MCF 10A (cell line): ENCODE measurements at regions of chr2 and their contacts with region 1.

Region 1: GRCh38 chr2:173075781-173076580 is at the start of gene MAP3K20:
- DNase-seq: peak; percentile 72
- H3K4me3 Mint-ChIP-seq: peak within 1 kb of the TSS; percentile 82
- H3K27ac Mint-ChIP-seq: peak within 1 kb of the TSS; percentile 95
- H3K4me1 Mint-ChIP-seq: peaks cover 31% of the 10 kb centered on the region
- H3K27me3 Mint-ChIP-seq: no peaks in the 10 kb centered on the region
- CTCF ChIP-seq: peak; percentile 40
- total RNA-seq, gene MAP3K20: 134 and 150 TPM in 2 replicates

Region 2: GRCh38 chr2:173015376-173015775 is 60.6 kb before region 1 on chr2:
- CTCF ChIA-PET with region 1: no interaction called
- POLR2A ChIA-PET with region 1: no interaction called
- intact Hi-C with region 1: no loop called
- DNase-seq: no peak
- H3K4me3 Mint-ChIP-seq: no peak overlapping the region
- H3K27ac Mint-ChIP-seq: no peak overlapping the region
- H3K4me1 Mint-ChIP-seq: no peaks in the 10 kb centered on the region
- H3K27me3 Mint-ChIP-seq: no peaks in the 10 kb centered on the region
- CTCF ChIP-seq: no peak

Region 3: DNA sequence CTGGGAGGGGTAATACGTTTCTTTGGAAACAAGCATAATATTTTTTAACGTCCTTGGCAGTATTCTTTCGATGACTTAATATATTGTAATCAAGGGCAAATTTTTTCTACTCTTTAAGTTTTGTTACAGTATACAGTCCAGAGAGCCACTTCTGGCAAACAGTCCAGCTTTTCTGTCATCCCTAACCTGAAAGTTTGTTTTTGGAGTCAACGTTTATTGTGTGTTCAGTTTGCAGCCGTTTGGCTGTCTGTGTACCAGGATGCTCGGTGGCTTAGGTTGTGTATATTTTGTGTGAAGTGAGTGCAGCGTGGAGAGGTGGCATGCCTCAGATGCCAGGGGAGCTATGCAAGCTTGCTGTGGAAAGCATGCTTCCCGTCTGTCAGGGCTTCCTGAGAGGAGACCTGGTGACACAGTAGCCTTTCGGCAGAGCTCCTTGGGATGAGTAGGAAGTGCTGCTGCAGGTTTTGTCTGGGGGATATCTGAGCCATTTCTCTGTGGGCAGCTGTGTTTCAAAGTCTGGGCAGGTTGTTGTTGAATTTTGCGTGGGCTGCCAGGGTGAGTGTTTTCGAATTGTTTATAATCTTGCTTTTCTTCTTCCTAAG is 14.4 kb after region 1 on chr2:
- CTCF ChIA-PET with region 1: interaction called, 3 read pairs
- POLR2A ChIA-PET with region 1: interaction called, 13 read pairs
- intact Hi-C with region 1: no loop called
- DNase-seq: no peak
- H3K4me3 Mint-ChIP-seq: peak overlapping the region; percentile 24
- H3K27ac Mint-ChIP-seq: peak overlapping the region; percentile 65
- H3K4me1 Mint-ChIP-seq: peaks cover 18% of the 10 kb centered on the region
- H3K27me3 Mint-ChIP-seq: no peaks in the 10 kb centered on the region
- CTCF ChIP-seq: no peak

Region 4: GRCh38 chr2:173151671-173152398 is 75.9 kb after region 1 on chr2:
- CTCF ChIA-PET with region 1: interaction called, 5 read pairs
- POLR2A ChIA-PET with region 1: interaction called, 22 read pairs
- intact Hi-C with region 1: loop called (anchors 2 kb)
- DNase-seq: peak; percentile 92
- H3K4me3 Mint-ChIP-seq: peak overlapping the region; percentile 24
- H3K27ac Mint-ChIP-seq: peak overlapping the region; percentile 91
- H3K4me1 Mint-ChIP-seq: peaks cover 56% of the 10 kb centered on the region
- H3K27me3 Mint-ChIP-seq: no peaks in the 10 kb centered on the region
- CTCF ChIP-seq: no peak

Region 5: DNA sequence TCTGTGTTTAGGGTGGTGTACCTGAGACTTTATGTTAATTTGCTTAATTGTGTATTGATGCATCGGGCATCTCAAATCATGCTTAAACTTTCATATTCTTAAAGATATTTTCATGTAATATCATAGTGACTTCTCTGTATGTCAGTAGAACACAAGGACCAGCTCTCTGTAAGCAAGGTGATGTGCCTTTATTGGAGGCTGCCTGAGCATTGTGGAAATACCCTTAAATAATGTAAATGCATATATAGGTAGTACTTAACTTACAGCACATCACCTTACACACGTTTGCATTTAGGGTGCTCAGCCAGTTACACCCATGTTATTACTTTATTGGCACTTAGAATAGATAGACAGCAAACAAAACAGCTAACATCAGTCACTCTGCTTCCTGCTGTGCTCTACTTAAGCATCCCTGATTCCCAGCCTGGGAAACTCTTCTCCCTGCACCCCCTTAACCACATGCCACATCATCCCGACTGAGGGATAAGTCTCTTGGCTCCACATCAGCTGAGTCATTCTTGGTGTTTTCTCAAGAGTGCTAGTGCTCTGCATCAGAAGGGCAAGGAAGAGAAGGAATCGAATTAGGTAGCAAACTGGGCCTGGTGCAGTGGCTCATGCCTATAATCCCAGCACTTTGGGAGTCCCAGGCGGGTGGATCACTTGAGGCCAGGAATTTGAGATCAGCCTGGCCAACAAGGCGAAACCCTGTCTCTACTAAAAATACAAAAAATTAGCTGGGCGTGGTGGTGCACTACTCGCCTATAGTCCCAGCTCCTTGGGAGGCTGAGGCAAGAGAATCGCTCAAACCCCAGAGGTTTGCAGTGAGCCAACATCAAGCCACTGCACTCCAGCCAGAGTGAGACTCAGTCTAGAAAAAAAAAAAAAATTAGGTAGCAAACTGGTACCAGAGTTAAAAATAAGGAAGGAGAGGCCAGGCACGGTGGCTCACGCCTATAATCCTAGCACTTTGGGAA is 108.3 kb after region 1 on chr2:
- CTCF ChIA-PET with region 1: interaction called, 4 read pairs
- POLR2A ChIA-PET with region 1: interaction called, 3 read pairs
- intact Hi-C with region 1: loop called (anchors 5 kb)
- DNase-seq: peak; percentile 99
- H3K4me3 Mint-ChIP-seq: no peak overlapping the region
- H3K27ac Mint-ChIP-seq: peak overlapping the region; percentile 1
- H3K4me1 Mint-ChIP-seq: peaks cover 23% of the 10 kb centered on the region
- H3K27me3 Mint-ChIP-seq: no peaks in the 10 kb centered on the region
- CTCF ChIP-seq: no peak